IMR-90 (cell line): ENCODE measurements at regions of chr2 and their contacts with region 1.

Region 1: GRCh38 chr2:157257312-157258252 is at the start of gene GALNT5:
- DNase-seq: peak; percentile 74
- ATAC-seq: peak; percentile 69
- H3K4me3 ChIP-seq: peak within 1 kb of the TSS; percentile 66
- H3K27ac ChIP-seq: peak within 1 kb of the TSS; percentile 97
- H3K4me1 ChIP-seq: peaks cover 18% of the 10 kb centered on the region
- H3K27me3 ChIP-seq: no peaks in the 10 kb centered on the region
- CTCF ChIP-seq: no peak
- POLR2A ChIP-seq: peak; percentile 42; the same call in 1 of the 2 replicates
- RAD21 ChIP-seq: no peak
- total RNA-seq, gene GALNT5: 63.3 and 73.6 TPM in 2 replicates

Region 2: GRCh38 chr2:157233506-157233905 is 24.1 kb before region 1 on chr2:
- CTCF ChIA-PET with region 1: interaction called, 3 read pairs
- POLR2A ChIA-PET with region 1: interaction called, 4 read pairs
- dilution Hi-C with region 1: no loop called
- in situ Hi-C with region 1: no loop called
- intact Hi-C with region 1: loop called (anchors 2 kb)
- DNase-seq: peak; percentile 84
- ATAC-seq: peak; percentile 56
- H3K4me3 ChIP-seq: no peak overlapping the region
- H3K27ac ChIP-seq: peak overlapping the region; percentile 84; the same call in 1 of the 2 replicates
- H3K4me1 ChIP-seq: peaks cover 17% of the 10 kb centered on the region
- H3K27me3 ChIP-seq: no peaks in the 10 kb centered on the region
- CTCF ChIP-seq: no peak
- POLR2A ChIP-seq: no peak
- RAD21 ChIP-seq: no peak

Region 3: GRCh38 chr2:157271590-157272203 is 14.1 kb after region 1 on chr2:
- CTCF ChIA-PET with region 1: no interaction called
- POLR2A ChIA-PET with region 1: no interaction called
- dilution Hi-C with region 1: no loop called
- in situ Hi-C with region 1: no loop called
- intact Hi-C with region 1: no loop called
- DNase-seq: no peak
- ATAC-seq: no peak
- H3K4me3 ChIP-seq: no peak overlapping the region
- H3K27ac ChIP-seq: no peak overlapping the region
- H3K4me1 ChIP-seq: no peaks in the 10 kb centered on the region; the same call in 1 of the 2 replicates
- H3K27me3 ChIP-seq: no peaks in the 10 kb centered on the region
- CTCF ChIP-seq: no peak
- POLR2A ChIP-seq: no peak
- RAD21 ChIP-seq: no peak

Region 4: GRCh38 chr2:157849591-157849990 is 592.0 kb after region 1 on chr2:
- CTCF ChIA-PET with region 1: no interaction called
- POLR2A ChIA-PET with region 1: no interaction called
- dilution Hi-C with region 1: no loop called
- in situ Hi-C with region 1: no loop called
- intact Hi-C with region 1: no loop called
- DNase-seq: no peak
- ATAC-seq: no peak
- H3K4me3 ChIP-seq: no peak overlapping the region
- H3K27ac ChIP-seq: no peak overlapping the region
- H3K4me1 ChIP-seq: peaks cover 2% of the 10 kb centered on the region; the same call in 1 of the 2 replicates
- H3K27me3 ChIP-seq: no peaks in the 10 kb centered on the region
- CTCF ChIP-seq: no peak
- POLR2A ChIP-seq: no peak
- RAD21 ChIP-seq: no peak